Kidney (tissue), 22 donors: ENCODE measurements at regions of chr17 and their contacts with region 1.

Region 1: DNA sequence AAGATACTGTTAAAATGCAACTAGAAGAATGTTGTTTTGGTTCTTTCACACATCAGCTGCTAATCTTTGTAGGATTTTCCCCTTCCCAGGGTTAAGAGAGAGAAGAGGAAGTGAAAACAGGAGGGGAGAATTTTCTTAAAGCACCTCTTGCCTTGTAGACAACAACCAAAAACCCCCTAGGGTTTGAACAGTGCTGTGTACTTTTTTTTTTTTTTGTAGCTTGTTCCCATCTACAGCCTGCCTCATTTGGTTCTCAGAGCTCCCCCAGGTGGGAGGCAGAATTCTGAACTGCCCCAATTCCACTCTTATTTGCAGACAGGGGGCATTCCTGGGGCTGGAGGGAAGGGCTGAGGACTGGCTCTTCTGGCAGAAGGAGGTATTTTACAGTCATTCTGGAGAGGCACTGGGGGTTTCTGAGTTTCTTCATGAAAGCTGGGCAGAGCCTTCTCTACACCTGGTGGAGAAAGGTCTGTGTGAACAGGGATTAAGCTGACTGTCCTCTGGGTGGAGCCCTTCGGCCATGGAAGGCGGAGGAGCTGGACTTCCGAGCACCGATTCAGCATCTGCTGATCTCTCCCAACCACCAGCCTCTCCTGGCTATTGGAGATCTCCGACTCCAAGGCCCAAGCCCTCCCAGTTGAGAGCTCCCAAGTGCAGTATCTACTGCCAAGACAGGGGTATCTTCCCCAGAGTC is 32.2 kb downstream of the SMARCE1 start:
- DNase-seq: peak; percentile 70 to 81 (median 76)
- H3K4me3 ChIP-seq: no peak overlapping the region
- H3K27ac ChIP-seq: peak overlapping the region in 1 of 2 donors; percentile 51
- H3K4me1 ChIP-seq: peaks cover 2 to 18% (median 4%) of the 10 kb centered on the region in 3 donors
- H3K27me3 ChIP-seq: no peaks in the 10 kb centered on the region
- CTCF ChIP-seq: peak; percentile 65

Region 2: GRCh38 chr17:40726919-40727318 is 111.5 kb after region 1 on chr17:
- intact Hi-C with region 1: no loop called
- DNase-seq: no peak
- H3K4me3 ChIP-seq: no peak overlapping the region
- H3K27ac ChIP-seq: no peak overlapping the region
- H3K4me1 ChIP-seq: no peaks in the 10 kb centered on the region
- H3K27me3 ChIP-seq: no peaks in the 10 kb centered on the region
- CTCF ChIP-seq: peak; percentile 48

Region 3: DNA sequence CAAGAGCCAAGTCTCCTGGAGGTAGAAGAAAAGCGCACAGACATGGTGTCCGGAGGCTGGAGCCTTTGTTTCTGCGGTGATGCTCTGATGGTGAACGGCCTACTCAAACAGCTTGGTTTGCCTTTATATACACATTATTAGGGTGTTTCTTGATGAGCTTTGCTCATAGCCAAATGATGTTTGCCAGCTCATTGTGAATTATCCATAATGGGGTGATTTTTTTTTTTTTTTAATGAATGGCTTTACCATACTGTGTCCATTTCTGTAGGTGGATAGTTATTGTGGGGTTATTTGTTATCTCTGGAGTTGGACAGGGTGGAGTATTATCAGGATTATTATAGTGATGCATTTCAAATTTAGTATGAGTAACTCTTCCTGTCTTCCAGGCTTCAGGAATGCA is 167.0 kb after region 1 on chr17 and contains the start of gene KRT27:
- intact Hi-C with region 1: loop called (anchors 10 kb)
- DNase-seq: no peak
- H3K4me3 ChIP-seq: no peak within 1 kb of the TSS
- H3K27ac ChIP-seq: no peak within 1 kb of the TSS
- H3K4me1 ChIP-seq: no peaks in the 10 kb centered on the region
- H3K27me3 ChIP-seq: no peaks in the 10 kb centered on the region
- CTCF ChIP-seq: no peak
- total RNA-seq, gene KRT27: not detected